Mammary epithelial cell (primary cell): ENCODE measurements at regions of chr4 and their contacts with region 1.

Region 1: GRCh38 chr4:182938205-182938645 is 21.0 kb upstream of the DCTD start:
- DNase-seq: peak; percentile 41
- H3K4me3 ChIP-seq: no peak overlapping the region
- H3K27ac ChIP-seq: no peak overlapping the region
- H3K4me1 ChIP-seq: no peaks in the 10 kb centered on the region
- H3K27me3 ChIP-seq: peaks cover 4% of the 10 kb centered on the region
- CTCF ChIP-seq: peak; percentile 88 to 98

Region 2: DNA sequence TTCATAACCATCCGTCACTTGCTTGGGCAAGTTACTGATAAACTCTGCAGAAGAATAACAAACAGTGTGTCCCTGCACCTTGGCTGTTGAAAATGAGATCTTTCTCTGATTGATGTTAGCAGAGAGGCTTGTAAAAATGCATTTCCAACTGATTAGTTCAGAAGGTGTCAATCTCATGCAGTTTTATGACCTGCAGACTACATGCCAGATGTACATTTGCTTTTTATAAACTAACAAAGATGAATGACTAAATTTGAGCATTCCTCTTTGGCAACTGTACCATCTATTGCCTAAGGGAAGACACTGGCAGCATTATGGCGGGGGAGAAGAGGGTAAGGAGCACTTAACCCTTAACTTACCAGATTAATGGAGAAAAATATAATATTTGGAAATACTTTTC is 213.8 kb before region 1 on chr4:
- CTCF ChIA-PET with region 1: no interaction called
- dilution Hi-C with region 1: no loop called
- in situ Hi-C with region 1: no loop called
- intact Hi-C with region 1: no loop called
- DNase-seq: peak; percentile 20
- H3K4me3 ChIP-seq: no peak overlapping the region
- H3K27ac ChIP-seq: no peak overlapping the region
- H3K4me1 ChIP-seq: peaks cover 6% of the 10 kb centered on the region
- H3K27me3 ChIP-seq: no peaks in the 10 kb centered on the region
- CTCF ChIP-seq: no peak

Region 3: GRCh38 chr4:183068502-183068901 is 130.3 kb after region 1 on chr4:
- CTCF ChIA-PET with region 1: no interaction called
- dilution Hi-C with region 1: no loop called
- in situ Hi-C with region 1: loop called (anchors 5 to 25 kb)
- intact Hi-C with region 1: loop called (anchors 1 kb)
- DNase-seq: no peak
- H3K4me3 ChIP-seq: no peak overlapping the region
- H3K27ac ChIP-seq: no peak overlapping the region
- H3K4me1 ChIP-seq: no peaks in the 10 kb centered on the region
- H3K27me3 ChIP-seq: no peaks in the 10 kb centered on the region
- CTCF ChIP-seq: no peak

Region 4: DNA sequence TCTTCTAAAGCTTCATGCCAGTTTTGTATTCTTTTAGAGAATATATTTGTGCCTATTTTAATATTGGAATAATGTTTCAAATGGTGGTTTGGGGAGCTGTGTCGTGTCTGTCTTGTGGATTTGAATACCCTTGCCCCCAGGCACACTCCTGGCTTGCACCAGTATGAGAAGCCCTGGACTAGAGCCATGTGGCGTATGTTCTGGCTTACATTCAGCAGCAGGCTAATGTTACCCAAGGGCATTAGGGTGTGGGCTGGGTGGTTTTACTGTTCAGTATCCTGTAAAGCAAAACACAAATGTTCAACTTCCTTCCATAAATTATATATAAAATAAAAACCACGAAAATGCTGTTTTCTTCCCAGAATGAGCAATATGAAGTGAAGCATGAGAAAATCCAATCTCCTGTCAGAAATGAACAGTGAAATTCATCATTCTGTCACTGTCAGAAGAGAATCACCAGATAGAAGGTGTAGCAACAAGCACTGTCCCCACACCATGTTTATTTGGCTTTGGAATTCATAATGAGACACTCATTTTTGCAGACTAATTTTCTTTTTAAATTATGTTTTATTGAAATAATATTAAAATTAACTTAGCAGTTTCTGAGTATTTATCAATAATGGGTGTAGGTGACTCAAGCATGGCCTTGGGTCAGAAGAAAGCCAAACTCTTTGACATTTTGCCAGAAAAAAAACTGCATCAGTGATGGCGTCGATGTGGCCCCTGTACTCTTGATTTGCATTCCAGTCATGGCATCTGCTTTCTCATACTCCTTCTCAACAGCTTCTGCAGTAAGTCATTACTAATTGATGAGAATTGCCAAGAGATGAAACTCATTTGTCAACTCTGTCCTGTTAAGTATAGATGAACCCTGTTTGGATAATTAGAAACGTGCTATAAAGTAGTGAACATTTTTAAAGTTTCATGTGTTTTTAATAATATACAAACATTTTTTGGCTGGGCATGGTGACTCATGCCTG is 204.6 kb after region 1 on chr4:
- CTCF ChIA-PET with region 1: no interaction called
- dilution Hi-C with region 1: no loop called
- in situ Hi-C with region 1: no loop called
- intact Hi-C with region 1: loop called (anchors 5 kb)
- DNase-seq: peak; percentile 78
- H3K4me3 ChIP-seq: peak overlapping the region in 1 of 3 experiments; percentile 10
- H3K27ac ChIP-seq: peak overlapping the region; percentile 27
- H3K4me1 ChIP-seq: peaks cover 42% of the 10 kb centered on the region
- H3K27me3 ChIP-seq: no peaks in the 10 kb centered on the region
- CTCF ChIP-seq: no peak

Region 5: GRCh38 chr4:183261953-183262775 is 323.9 kb after region 1 on chr4:
- CTCF ChIA-PET with region 1: interaction called, 8 read pairs
- dilution Hi-C with region 1: no loop called
- in situ Hi-C with region 1: loop called (anchors 5 to 10 kb)
- intact Hi-C with region 1: loop called (anchors 1 kb)
- DNase-seq: peak; percentile 64
- H3K4me3 ChIP-seq: no peak overlapping the region
- H3K27ac ChIP-seq: no peak overlapping the region
- H3K4me1 ChIP-seq: no peaks in the 10 kb centered on the region
- H3K27me3 ChIP-seq: no peaks in the 10 kb centered on the region
- CTCF ChIP-seq: peak; percentile 85 to 92

Region 6: DNA sequence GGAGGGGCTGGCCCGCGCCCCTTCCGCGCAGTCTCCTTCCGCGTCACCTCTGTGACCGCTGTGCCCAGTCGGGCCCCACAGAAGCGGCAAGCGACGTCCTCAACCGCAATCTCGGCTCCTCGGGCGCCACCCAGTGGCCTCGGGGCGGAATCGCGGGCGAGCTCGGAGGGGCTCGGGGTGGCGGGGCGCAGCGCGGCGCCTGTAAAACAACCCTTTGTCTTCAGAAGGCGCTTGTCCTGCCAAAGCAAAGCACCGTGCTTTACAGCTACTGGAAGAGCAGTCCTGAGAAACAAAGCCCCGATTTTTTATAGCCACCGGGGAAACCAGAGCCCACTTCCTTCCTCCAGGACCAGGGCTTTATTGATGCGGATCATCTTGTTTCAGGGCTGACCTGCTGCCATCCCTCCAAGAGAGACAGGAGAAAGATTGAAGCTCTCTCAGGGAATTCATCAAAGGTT is 468.9 kb after region 1 on chr4:
- CTCF ChIA-PET with region 1: no interaction called
- dilution Hi-C with region 1: no loop called
- in situ Hi-C with region 1: no loop called
- intact Hi-C with region 1: loop called (anchors 2 kb)
- DNase-seq: peak; percentile 63
- H3K4me3 ChIP-seq: peak overlapping the region; percentile 44 to 54 (median 47)
- H3K27ac ChIP-seq: no peak overlapping the region
- H3K4me1 ChIP-seq: no peaks in the 10 kb centered on the region
- H3K27me3 ChIP-seq: no peaks in the 10 kb centered on the region
- CTCF ChIP-seq: peak; percentile 64 to 94